ENCODE measurements at regions of chr3 and their contacts with region 1.

Region 1: GRCh38 chr3:119831022-119831421 is 49.1 kb downstream of the NR1I2 start:
- DNase-seq: no peak
- CTCF ChIP-seq: no peak

Region 2: GRCh38 chr3:119819806-119820205 is 11.2 kb before region 1 on chr3:
- CTCF ChIA-PET with region 1: interaction called, 15 read pairs
- POLR2A ChIA-PET with region 1: no interaction called
- DNase-seq: no peak
- CTCF ChIP-seq: no peak